Right ventricle myocardium inferior (tissue), 1 donor: ENCODE measurements at regions of chr18 and their contacts with region 1.

Region 1: DNA sequence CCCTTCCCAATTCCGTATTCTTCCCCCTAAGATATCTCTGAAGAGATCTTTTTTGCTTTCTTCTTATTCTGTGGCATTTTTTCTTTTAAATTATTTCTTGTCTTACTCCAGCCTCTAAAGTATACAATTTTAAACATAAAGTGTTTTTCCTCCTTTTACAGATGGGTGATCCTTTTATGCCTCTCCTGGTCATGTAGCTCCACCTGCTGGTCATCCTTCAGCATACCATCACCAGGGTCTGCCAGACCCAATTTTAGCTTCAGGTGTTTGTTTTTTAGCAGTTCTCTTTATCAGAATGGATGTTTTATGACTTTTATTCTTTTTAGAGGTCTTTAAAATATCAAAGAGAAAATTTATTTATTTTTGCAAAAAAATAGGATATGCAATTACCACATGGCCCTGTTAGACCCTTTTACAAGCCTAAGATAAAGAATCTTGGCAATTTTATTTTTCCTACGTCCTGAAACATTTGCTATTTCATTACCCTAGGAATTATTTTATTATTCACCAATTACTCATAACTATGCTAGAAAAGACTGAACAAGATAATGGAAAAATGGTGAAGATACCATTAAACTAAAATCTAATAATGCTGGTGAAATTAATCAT is 55.5 kb downstream of the PIGN start:
- DNase-seq: no peak
- ATAC-seq: no peak

Region 2: DNA sequence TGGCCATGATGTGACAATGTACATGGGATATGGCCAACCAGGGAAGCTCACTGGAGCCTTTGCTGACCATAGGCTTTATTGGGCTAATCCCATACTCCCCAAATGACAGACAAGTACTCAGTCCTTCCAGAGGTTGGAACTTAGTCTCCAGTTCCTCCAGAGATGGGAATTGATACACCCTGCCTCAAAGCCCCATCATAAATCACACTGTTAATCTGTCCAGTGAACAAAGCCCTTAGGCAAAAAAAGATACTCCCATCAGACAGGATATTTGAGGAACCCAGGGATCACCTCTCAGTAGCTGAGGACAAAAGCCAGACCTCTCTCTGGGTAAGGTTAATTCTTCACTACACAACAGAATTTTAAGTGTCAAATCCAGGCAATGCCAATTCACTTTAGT is 1045.6 kb before region 1 on chr18:
- intact Hi-C with region 1: loop called (anchors 5 kb)
- DNase-seq: no peak
- ATAC-seq: no peak

Region 3: GRCh38 chr18:61551586-61551985 is 579.8 kb before region 1 on chr18:
- intact Hi-C with region 1: loop called (anchors 2 kb)
- DNase-seq: no peak
- ATAC-seq: peak; percentile 81

Region 4: GRCh38 chr18:61901323-61901986 is 229.9 kb before region 1 on chr18:
- intact Hi-C with region 1: loop called (anchors 5 kb)
- DNase-seq: no peak
- ATAC-seq: peak; percentile 53